Activated B cell treated with CpG ODN at 0.5 μM for 24 hours (primary cell): ENCODE measurements at regions of chr3 and their contacts with region 1.

Region 1: DNA sequence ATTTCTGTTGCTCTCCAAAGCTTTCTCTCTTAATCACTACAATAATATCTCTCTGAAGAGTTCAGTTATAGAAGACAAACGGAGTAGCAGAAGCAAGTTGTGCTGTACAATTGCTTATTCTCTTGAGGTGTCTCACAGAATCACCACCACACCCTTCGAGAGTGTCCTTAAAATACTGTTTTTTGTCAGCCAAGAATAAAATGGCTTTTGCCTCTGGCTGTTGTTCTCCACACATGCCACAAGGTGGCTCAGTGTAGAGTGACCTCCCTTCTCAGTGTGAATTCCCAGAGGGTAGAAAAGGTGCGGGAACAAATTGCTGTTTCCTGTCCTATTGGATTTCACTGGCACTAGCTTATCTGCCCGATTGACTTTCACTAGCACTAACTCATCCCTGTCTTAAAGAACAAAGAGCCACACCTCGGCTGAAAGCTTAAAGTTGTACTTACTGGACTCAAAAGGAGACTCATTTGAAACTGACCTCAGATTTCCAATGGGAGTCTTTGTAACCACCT is 134.2 kb upstream of the SATB1 start:
- DNase-seq: no peak
- ATAC-seq: peak; percentile 65
- H3K4me3 Mint-ChIP-seq: no peak overlapping the region
- H3K27ac Mint-ChIP-seq: no peak overlapping the region
- H3K4me1 Mint-ChIP-seq: peaks cover 27% of the 10 kb centered on the region
- H3K27me3 Mint-ChIP-seq: no peaks in the 10 kb centered on the region
- CTCF ChIP-seq: no peak

Region 2: GRCh38 chr3:18572809-18573208 is 13.4 kb after region 1 on chr3:
- CTCF ChIA-PET with region 1: interaction called, 13 read pairs
- POLR2A ChIA-PET with region 1: no interaction called
- intact Hi-C with region 1: no loop called
- DNase-seq: no peak
- ATAC-seq: no peak
- H3K4me3 Mint-ChIP-seq: no peak overlapping the region
- H3K27ac Mint-ChIP-seq: peak overlapping the region; percentile 2
- H3K4me1 Mint-ChIP-seq: no peaks in the 10 kb centered on the region
- H3K27me3 Mint-ChIP-seq: no peaks in the 10 kb centered on the region
- CTCF ChIP-seq: no peak

Region 3: DNA sequence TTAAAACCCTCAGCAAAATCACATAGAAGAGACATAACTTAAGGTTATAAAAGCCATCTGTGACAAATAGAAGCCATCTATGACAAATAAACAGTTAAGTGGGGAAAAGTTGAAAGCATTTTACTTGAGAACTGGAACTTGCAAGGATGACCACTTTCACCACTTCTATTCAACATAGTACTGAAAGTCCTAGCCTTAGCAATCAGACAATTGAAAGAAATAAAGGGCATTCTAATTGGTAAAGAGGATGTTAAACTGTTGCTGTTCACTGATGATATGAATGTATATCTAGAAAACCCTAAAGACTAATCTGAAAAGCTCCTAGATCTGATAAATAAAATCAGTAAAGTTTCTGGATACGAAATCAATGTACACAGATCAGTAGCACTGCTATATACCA is 52.6 kb after region 1 on chr3:
- CTCF ChIA-PET with region 1: no interaction called
- POLR2A ChIA-PET with region 1: no interaction called
- intact Hi-C with region 1: no loop called
- DNase-seq: no peak
- ATAC-seq: no peak
- H3K4me3 Mint-ChIP-seq: no peak overlapping the region
- H3K27ac Mint-ChIP-seq: no peak overlapping the region
- H3K4me1 Mint-ChIP-seq: peaks cover 10% of the 10 kb centered on the region
- H3K27me3 Mint-ChIP-seq: no peaks in the 10 kb centered on the region
- CTCF ChIP-seq: no peak

Region 4: DNA sequence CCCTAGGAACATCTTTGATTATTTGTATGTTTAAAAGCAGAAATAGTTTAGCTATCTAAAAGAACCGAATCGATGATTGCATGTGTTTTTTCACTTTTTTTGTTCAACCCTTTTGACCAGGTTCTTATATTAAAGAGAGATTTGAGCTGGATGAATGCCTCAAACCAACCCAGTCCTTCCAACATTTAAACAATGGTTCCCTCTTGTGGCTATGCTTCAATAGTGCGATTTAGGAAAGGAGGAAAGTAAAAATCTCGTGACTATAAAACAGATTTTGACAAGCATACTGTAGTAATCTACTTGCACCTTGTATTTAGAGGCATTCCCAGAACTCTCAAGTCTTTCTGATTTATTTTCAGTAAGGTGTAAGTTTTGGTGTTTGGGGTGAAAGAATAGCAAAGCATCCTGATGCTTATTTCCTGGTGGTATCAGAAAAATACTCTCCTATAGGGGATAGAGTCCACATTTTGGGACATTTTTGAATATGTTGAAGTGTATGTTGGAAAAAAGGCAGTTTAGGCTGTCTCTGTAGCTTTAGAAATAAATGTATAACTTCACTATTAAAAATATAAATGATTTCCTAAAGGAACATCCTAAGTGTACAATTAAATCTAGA is 429.3 kb after region 1 on chr3:
- CTCF ChIA-PET with region 1: no interaction called
- POLR2A ChIA-PET with region 1: no interaction called
- intact Hi-C with region 1: loop called (anchors 1 kb)
- DNase-seq: no peak
- ATAC-seq: no peak
- H3K4me3 Mint-ChIP-seq: no peak overlapping the region
- H3K27ac Mint-ChIP-seq: no peak overlapping the region
- H3K4me1 Mint-ChIP-seq: no peaks in the 10 kb centered on the region
- H3K27me3 Mint-ChIP-seq: peaks cover 2% of the 10 kb centered on the region
- CTCF ChIP-seq: no peak